Naive thymus-derived CD4-positive, alpha-beta T cell (primary cell): ENCODE measurements at regions of chr14 and their contacts with region 1.

Region 1: DNA sequence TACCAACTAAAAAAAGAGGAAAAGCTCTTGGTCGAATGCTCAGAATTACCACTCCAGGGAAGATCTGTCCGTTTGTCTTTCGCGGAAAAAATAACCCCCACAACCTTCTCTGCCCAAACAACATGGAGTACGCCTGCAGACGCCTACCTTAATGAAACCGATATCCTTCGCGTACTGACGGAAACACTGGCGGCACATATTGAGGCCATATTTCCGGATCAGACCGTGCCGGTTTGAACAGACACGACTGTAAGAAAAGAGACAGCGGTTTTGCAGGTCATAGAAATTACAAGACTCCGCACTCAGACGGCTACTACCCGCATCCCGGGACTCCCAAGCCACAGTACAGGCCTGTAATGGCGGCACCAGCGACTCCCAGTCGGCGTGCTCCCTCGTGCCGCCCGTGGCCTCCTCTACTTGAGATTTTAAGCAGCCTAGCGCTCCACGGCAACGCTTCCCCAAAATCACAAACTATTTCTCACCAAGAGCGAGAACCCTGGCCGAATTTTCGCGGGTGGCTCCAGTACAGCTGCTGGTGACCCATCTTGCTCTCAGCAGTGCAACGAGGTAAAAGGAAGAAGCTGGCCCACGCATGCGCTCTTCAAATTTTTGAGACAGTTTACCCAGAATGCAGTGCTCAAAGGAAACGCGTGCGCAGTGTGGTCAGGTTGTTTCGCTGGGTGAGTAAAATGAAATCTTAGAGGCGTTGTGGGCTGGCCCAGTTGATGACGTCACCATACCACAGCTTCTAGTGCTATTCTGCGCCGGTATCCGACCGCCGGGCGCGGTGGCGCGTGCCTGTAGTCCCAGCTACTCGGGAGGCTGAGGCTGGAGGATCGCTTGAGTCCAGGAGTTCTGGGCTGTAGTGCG is at the start of gene RPS29:
- DNase-seq: peak; percentile 97 to 99 (median 99)
- ATAC-seq: peak; percentile 91
- H3K4me3 ChIP-seq: peak within 1 kb of the TSS; percentile 98
- H3K4me3 Mint-ChIP-seq: peak within 1 kb of the TSS; percentile 87 to 100 (median 94)
- H3K27ac ChIP-seq: peak within 1 kb of the TSS; percentile 84
- H3K27ac Mint-ChIP-seq: peak within 1 kb of the TSS; percentile 90 to 100 (median 98)
- H3K4me1 ChIP-seq: peaks cover 19 to 21% of the 10 kb centered on the region in 2 donors
- H3K4me1 Mint-ChIP-seq: peaks cover 33 to 60% (median 46%) of the 10 kb centered on the region in 7 donors
- H3K27me3 ChIP-seq: no peaks in the 10 kb centered on the region
- H3K27me3 Mint-ChIP-seq: peaks cover 0 to 5% (median 0%) of the 10 kb centered on the region in 5 donors
- total RNA-seq, gene RPS29: 2,254 to 4,907 (median 2,729) TPM

Region 2: GRCh38 chr14:47637753-47638152 is 1948.3 kb before region 1 on chr14:
- CTCF ChIA-PET with region 1: no interaction called
- POLR2A ChIA-PET with region 1: no interaction called
- intact Hi-C with region 1: no loop called
- DNase-seq: no peak
- ATAC-seq: no peak
- H3K4me3 ChIP-seq: no peak overlapping the region
- H3K4me3 Mint-ChIP-seq: no peak overlapping the region
- H3K27ac ChIP-seq: no peak overlapping the region
- H3K27ac Mint-ChIP-seq: no peak overlapping the region
- H3K4me1 ChIP-seq: no peaks in the 10 kb centered on the region
- H3K4me1 Mint-ChIP-seq: no peaks in the 10 kb centered on the region
- H3K27me3 ChIP-seq: no peaks in the 10 kb centered on the region
- H3K27me3 Mint-ChIP-seq: no peaks in the 10 kb centered on the region

Region 3: DNA sequence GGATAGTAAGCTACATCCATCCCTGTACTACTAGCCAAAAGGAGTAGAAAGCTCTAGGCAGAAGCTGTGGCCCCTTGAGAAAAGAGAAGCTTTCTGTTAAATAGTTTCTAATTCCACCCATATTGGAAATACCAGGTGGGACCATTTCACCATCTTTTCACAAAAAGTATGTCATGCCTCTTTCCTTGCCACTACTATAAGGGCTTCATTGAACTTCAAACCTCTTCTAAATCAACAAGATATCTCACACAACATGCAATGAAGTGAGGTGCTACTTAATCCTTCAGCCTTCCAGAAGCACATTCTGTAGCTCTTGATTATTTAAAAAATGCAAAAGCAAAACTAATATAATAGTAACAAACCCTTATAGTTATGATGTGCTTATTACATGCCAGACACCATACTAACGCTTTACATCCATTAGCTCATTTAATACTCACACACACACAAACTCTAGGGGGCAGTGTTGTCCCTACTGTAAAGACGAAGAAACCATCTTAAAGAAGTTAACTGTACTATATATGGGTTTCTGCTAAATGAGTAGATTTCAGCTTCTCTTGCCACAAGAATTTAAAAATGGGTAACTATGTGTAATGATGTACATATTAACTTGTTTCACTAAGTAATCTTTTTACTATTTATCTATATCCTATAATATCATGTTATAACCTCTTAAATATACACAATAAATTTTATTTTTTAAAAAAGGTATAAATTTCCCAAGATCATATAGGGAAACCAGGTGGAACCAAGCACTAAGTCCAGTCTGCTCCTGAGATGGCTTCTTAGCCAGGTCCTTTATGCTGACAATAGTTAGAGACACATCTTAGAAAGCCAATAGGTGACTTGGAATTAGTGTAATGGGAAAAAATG is 124.3 kb before region 1 on chr14:
- CTCF ChIA-PET with region 1: interaction called, 6 read pairs
- POLR2A ChIA-PET with region 1: interaction called, 7 read pairs
- intact Hi-C with region 1: loop called (anchors 1 to 2 kb)
- DNase-seq: peak in 7 of 9 donors; percentile 43 to 74 (median 67)
- ATAC-seq: peak; percentile 95
- H3K4me3 ChIP-seq: no peak overlapping the region
- H3K4me3 Mint-ChIP-seq: no peak overlapping the region
- H3K27ac ChIP-seq: no peak overlapping the region
- H3K27ac Mint-ChIP-seq: no peak overlapping the region
- H3K4me1 ChIP-seq: no peaks in the 10 kb centered on the region
- H3K4me1 Mint-ChIP-seq: no peaks in the 10 kb centered on the region
- H3K27me3 ChIP-seq: no peaks in the 10 kb centered on the region
- H3K27me3 Mint-ChIP-seq: peaks cover 0 to 31% (median 6%) of the 10 kb centered on the region in 5 donors

Region 4: GRCh38 chr14:49516286-49516685 is 69.8 kb before region 1 on chr14:
- CTCF ChIA-PET with region 1: no interaction called
- POLR2A ChIA-PET with region 1: no interaction called
- intact Hi-C with region 1: no loop called
- DNase-seq: no peak
- ATAC-seq: no peak
- H3K4me3 ChIP-seq: no peak overlapping the region
- H3K4me3 Mint-ChIP-seq: no peak overlapping the region
- H3K27ac ChIP-seq: no peak overlapping the region
- H3K27ac Mint-ChIP-seq: no peak overlapping the region
- H3K4me1 ChIP-seq: no peaks in the 10 kb centered on the region
- H3K4me1 Mint-ChIP-seq: no peaks in the 10 kb centered on the region
- H3K27me3 ChIP-seq: no peaks in the 10 kb centered on the region
- H3K27me3 Mint-ChIP-seq: peaks cover 0 to 10% (median 3%) of the 10 kb centered on the region in 5 donors

Region 5: GRCh38 chr14:49550286-49551184 is 35.5 kb before region 1 on chr14:
- CTCF ChIA-PET with region 1: no interaction called
- POLR2A ChIA-PET with region 1: no interaction called
- intact Hi-C with region 1: loop called in 1 of 2 experiments (anchors 1 kb)
- DNase-seq: no peak
- ATAC-seq: no peak
- H3K4me3 ChIP-seq: no peak overlapping the region
- H3K4me3 Mint-ChIP-seq: no peak overlapping the region
- H3K27ac ChIP-seq: no peak overlapping the region
- H3K27ac Mint-ChIP-seq: no peak overlapping the region
- H3K4me1 ChIP-seq: no peaks in the 10 kb centered on the region
- H3K4me1 Mint-ChIP-seq: no peaks in the 10 kb centered on the region
- H3K27me3 ChIP-seq: no peaks in the 10 kb centered on the region
- H3K27me3 Mint-ChIP-seq: peaks cover 0 to 8% (median 0%) of the 10 kb centered on the region in 5 donors

Region 6: GRCh38 chr14:49620182-49621113 is 34.4 kb after region 1 on chr14 and contains the starts of genes MGAT2 and RPL36AL:
- CTCF ChIA-PET with region 1: interaction called, 24 read pairs
- POLR2A ChIA-PET with region 1: interaction called, 137 read pairs
- intact Hi-C with region 1: loop called (anchors 1 kb)
- DNase-seq: peak; percentile 89 to 95 (median 94)
- ATAC-seq: peak; percentile 92
- H3K4me3 ChIP-seq: peak within 1 kb of the TSS; percentile 98
- H3K4me3 Mint-ChIP-seq: peak within 1 kb of the TSS; percentile 94 to 99 (median 98)
- H3K27ac ChIP-seq: peak within 1 kb of the TSS; percentile 97
- H3K27ac Mint-ChIP-seq: peak within 1 kb of the TSS; percentile 95 to 100 (median 99)
- H3K4me1 ChIP-seq: peaks cover 40 to 42% of the 10 kb centered on the region in 2 donors
- H3K4me1 Mint-ChIP-seq: peaks cover 36 to 75% (median 56%) of the 10 kb centered on the region in 7 donors
- H3K27me3 ChIP-seq: no peaks in the 10 kb centered on the region
- H3K27me3 Mint-ChIP-seq: no peaks in the 10 kb centered on the region
- total RNA-seq, gene MGAT2: 16.8 to 69.3 (median 35.1) TPM
- total RNA-seq, gene RPL36AL: 177 to 429 (median 281) TPM

Region 7: DNA sequence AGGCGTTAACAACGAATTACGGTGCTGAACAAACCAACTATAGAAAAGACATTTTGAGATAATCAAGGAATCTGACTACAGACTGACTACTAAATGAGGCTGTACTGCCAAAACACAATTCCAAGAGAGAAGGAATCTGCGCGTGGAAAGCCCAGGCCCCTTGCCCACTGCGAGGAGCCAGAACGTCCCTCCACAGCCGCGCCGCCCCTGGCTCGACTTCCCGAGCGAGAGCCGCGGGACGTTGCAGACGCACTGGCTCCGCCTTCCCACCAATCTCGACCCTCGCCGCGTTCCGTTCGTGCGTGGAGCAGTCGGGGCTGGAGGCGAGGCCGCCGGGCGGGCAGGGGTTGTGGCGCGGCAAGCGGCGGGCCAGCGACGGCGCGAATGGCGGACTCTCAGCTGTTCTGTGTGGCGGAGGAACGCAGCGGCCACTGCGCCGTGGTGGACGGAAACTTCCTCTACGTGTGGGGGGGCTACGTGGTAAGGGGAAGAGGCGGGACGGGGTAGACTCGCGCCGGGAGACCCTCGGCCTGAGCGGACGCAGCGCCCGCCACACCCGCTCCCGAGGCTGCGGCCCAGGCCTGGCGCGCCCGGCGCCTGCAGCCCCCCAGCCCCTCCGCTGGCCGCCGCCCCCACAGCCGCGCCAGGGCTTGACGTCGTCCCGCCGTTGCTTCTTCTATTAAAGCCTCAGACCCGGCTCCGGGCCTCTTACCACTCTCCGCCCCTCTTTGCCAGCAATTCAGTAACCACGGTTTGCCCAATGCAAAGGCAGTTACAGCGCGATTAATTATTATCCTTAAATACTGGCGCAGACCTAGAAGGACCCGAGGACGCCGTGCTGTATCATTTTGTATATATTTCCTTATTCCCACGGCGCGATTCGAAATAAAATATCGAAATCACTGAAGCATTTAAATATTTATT is 107.0 kb after region 1 on chr14 and contains the start of gene KLHDC1:
- CTCF ChIA-PET with region 1: no interaction called
- POLR2A ChIA-PET with region 1: interaction called, 9 read pairs
- intact Hi-C with region 1: loop called (anchors 1 kb)
- DNase-seq: peak; percentile 70 to 84 (median 80)
- ATAC-seq: peak; percentile 89
- H3K4me3 ChIP-seq: peak within 1 kb of the TSS; percentile 67
- H3K4me3 Mint-ChIP-seq: peak within 1 kb of the TSS; percentile 81 to 100 (median 89)
- H3K27ac ChIP-seq: peak within 1 kb of the TSS; percentile 80
- H3K27ac Mint-ChIP-seq: peak within 1 kb of the TSS; percentile 79 to 99 (median 94)
- H3K4me1 ChIP-seq: peaks cover 8 to 19% of the 10 kb centered on the region in 2 donors
- H3K4me1 Mint-ChIP-seq: peaks cover 20 to 52% (median 43%) of the 10 kb centered on the region in 7 donors
- H3K27me3 ChIP-seq: no peaks in the 10 kb centered on the region
- H3K27me3 Mint-ChIP-seq: no peaks in the 10 kb centered on the region
- total RNA-seq, gene KLHDC1: 2.6 to 18.0 (median 12.2) TPM

Region 8: GRCh38 chr14:49820176-49820575 is 234.1 kb after region 1 on chr14:
- CTCF ChIA-PET with region 1: no interaction called
- POLR2A ChIA-PET with region 1: no interaction called
- intact Hi-C with region 1: no loop called
- DNase-seq: no peak
- ATAC-seq: no peak
- H3K4me3 ChIP-seq: no peak overlapping the region
- H3K4me3 Mint-ChIP-seq: no peak overlapping the region
- H3K27ac ChIP-seq: no peak overlapping the region
- H3K27ac Mint-ChIP-seq: no peak overlapping the region
- H3K4me1 ChIP-seq: no peaks in the 10 kb centered on the region
- H3K4me1 Mint-ChIP-seq: peaks cover 0 to 9% (median 7%) of the 10 kb centered on the region in 7 donors
- H3K27me3 ChIP-seq: no peaks in the 10 kb centered on the region
- H3K27me3 Mint-ChIP-seq: no peaks in the 10 kb centered on the region

Region 9: GRCh38 chr14:49946320-49947141 is 360.5 kb after region 1 on chr14:
- CTCF ChIA-PET with region 1: no interaction called
- POLR2A ChIA-PET with region 1: no interaction called
- intact Hi-C with region 1: no loop called
- DNase-seq: peak in 7 of 9 donors; percentile 30 to 55 (median 43)
- ATAC-seq: peak; percentile 71
- H3K4me3 ChIP-seq: peak overlapping the region; percentile 36
- H3K4me3 Mint-ChIP-seq: peak overlapping the region; percentile 43 to 81 (median 74)
- H3K27ac ChIP-seq: peak overlapping the region; percentile 66
- H3K27ac Mint-ChIP-seq: peak overlapping the region; percentile 82 to 98 (median 94)
- H3K4me1 ChIP-seq: peaks cover 28 to 46% of the 10 kb centered on the region in 2 donors
- H3K4me1 Mint-ChIP-seq: peaks cover 26 to 86% (median 77%) of the 10 kb centered on the region in 7 donors
- H3K27me3 ChIP-seq: no peaks in the 10 kb centered on the region
- H3K27me3 Mint-ChIP-seq: no peaks in the 10 kb centered on the region

Region 10: GRCh38 chr14:50116181-50116956 is 530.3 kb after region 1 on chr14 and contains the start of gene VCPKMT:
- CTCF ChIA-PET with region 1: no interaction called
- POLR2A ChIA-PET with region 1: interaction called, 7 read pairs
- intact Hi-C with region 1: loop called in 1 of 2 experiments (anchors 1 kb)
- DNase-seq: peak; percentile 93 to 97 (median 97)
- ATAC-seq: peak; percentile 99
- H3K4me3 ChIP-seq: peak within 1 kb of the TSS; percentile 74
- H3K4me3 Mint-ChIP-seq: peak within 1 kb of the TSS; percentile 92 to 98 (median 96)
- H3K27ac ChIP-seq: peak within 1 kb of the TSS; percentile 94
- H3K27ac Mint-ChIP-seq: peak within 1 kb of the TSS; percentile 97 to 99 (median 98)
- H3K4me1 ChIP-seq: peaks cover 18 to 20% of the 10 kb centered on the region in 2 donors
- H3K4me1 Mint-ChIP-seq: peaks cover 11 to 37% (median 23%) of the 10 kb centered on the region in 7 donors
- H3K27me3 ChIP-seq: no peaks in the 10 kb centered on the region
- H3K27me3 Mint-ChIP-seq: no peaks in the 10 kb centered on the region
- total RNA-seq, gene VCPKMT: 10.3 to 25.9 (median 17.4) TPM

Region 11: GRCh38 chr14:51094901-51095853 is 1509.1 kb after region 1 on chr14 and contains the start of gene TRIM9:
- CTCF ChIA-PET with region 1: no interaction called
- POLR2A ChIA-PET with region 1: no interaction called
- intact Hi-C with region 1: loop called in 1 of 2 experiments (anchors 10 kb)
- DNase-seq: peak; percentile 77 to 93 (median 91)
- ATAC-seq: peak; percentile 96
- H3K4me3 ChIP-seq: peak within 1 kb of the TSS; percentile 83
- H3K4me3 Mint-ChIP-seq: peak within 1 kb of the TSS; percentile 89 to 98 (median 95)
- H3K27ac ChIP-seq: peak within 1 kb of the TSS; percentile 58
- H3K27ac Mint-ChIP-seq: peak within 1 kb of the TSS; percentile 9 to 93 (median 87)
- H3K4me1 ChIP-seq: peaks cover 3 to 8% of the 10 kb centered on the region in 2 donors
- H3K4me1 Mint-ChIP-seq: peaks cover 4 to 18% (median 9%) of the 10 kb centered on the region in 7 donors
- H3K27me3 ChIP-seq: peaks cover 0 to 3% of the 10 kb centered on the region in 2 donors
- H3K27me3 Mint-ChIP-seq: peaks cover 12 to 70% (median 17%) of the 10 kb centered on the region in 5 donors
- total RNA-seq, gene TRIM9: 0.27 to 1.7 (median 0.39) TPM